PC-3 (cell line): ENCODE measurements at regions of chr12 and their contacts with region 1.

Region 1: DNA sequence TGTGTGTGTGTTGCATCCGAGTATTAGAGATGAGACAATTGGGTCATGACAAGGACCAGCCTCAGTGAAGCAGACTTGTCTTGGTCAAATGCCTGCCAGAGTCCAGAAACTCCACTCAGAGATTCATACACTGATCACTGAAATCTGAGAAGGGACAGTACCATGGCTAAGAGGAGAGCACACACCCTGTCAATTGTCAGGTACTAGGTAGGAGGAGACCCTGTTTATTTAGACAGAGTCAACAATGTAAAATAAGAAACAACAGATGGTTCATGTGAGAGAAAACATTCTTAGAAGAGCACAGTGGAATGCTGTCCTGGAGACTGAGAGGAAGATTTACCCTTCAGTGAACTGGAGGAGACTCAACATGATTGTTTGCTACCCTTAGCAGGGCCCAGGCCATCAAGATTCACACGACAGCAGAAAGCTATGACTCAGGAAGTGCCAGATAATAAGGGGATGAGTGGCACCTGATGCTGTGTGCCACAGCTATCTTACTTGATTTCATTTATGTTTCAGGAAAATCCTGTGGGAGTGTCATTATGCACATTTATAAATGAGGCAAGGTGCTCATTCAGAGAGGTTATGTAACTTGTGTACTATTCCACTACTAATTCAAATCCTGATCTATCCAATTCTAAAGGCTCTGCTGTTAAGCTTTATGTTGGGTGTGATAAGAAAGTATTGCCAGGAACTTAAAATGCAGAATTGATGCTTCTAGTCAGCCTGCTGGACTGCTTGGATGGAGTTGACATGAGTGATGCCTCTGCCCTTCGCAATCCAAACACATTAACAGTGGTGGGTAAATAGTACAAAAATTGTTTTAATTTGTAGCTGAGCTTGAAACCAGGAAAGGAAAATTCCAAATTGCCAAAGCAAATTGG is 136.6 kb upstream of the NEDD1 start:
- DNase-seq: peak; percentile 64
- ATAC-seq: peak; percentile 58
- H3K4me3 ChIP-seq: no peak overlapping the region
- H3K27ac ChIP-seq: peak overlapping the region; percentile 4
- H3K4me1 ChIP-seq: peaks cover 23% of the 10 kb centered on the region
- H3K27me3 ChIP-seq: no peaks in the 10 kb centered on the region
- CTCF ChIP-seq: no peak

Region 2: DNA sequence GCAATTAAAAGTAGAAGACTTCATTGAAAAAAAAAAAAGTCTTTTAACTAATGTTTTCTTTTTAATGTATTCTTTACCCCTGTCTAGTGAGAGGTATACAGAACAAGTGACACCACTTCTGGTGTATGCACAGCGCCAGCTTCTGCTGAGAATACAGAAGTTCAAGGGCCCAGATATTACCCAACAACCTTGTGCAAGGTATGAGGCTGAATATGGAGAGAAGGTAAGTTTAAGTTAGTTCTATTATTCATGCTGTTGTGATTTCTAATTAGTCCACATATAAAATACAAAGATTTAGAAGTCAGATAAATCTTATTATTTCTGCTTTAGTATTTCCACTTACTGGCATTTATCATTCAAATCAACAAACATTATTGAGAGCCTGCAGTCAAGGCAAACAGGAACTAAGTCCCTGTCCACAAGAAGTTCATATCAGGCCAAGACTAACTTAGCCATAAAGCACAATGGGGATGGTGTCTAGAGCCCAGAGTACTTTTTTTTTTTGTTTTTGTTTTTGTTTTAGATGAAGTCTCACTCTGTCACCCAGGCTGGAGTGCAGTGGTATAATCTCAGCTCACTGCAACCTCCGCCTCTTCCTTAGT is 112.2 kb before region 1 on chr12:
- CTCF ChIA-PET with region 1: no interaction called
- POLR2A ChIA-PET with region 1: no interaction called
- intact Hi-C with region 1: no loop called
- DNase-seq: no peak
- ATAC-seq: peak; percentile 77
- H3K4me3 ChIP-seq: no peak overlapping the region
- H3K27ac ChIP-seq: no peak overlapping the region
- H3K4me1 ChIP-seq: no peaks in the 10 kb centered on the region
- H3K27me3 ChIP-seq: peaks cover 4% of the 10 kb centered on the region; the same call in 1 of the 2 replicates
- CTCF ChIP-seq: no peak; the same call in 1 of the 2 replicates

Region 3: GRCh38 chr12:96719660-96720363 is 50.6 kb before region 1 on chr12:
- CTCF ChIA-PET with region 1: no interaction called
- POLR2A ChIA-PET with region 1: no interaction called
- intact Hi-C with region 1: loop called (anchors 2 kb)
- DNase-seq: peak; percentile 63
- ATAC-seq: peak; percentile 70
- H3K4me3 ChIP-seq: peak overlapping the region; percentile 73
- H3K27ac ChIP-seq: peak overlapping the region; percentile 10; the same call in 1 of the 2 replicates
- H3K4me1 ChIP-seq: peaks cover 10% of the 10 kb centered on the region; the same call in 1 of the 2 replicates
- H3K27me3 ChIP-seq: no peaks in the 10 kb centered on the region
- CTCF ChIP-seq: no peak

Region 4: DNA sequence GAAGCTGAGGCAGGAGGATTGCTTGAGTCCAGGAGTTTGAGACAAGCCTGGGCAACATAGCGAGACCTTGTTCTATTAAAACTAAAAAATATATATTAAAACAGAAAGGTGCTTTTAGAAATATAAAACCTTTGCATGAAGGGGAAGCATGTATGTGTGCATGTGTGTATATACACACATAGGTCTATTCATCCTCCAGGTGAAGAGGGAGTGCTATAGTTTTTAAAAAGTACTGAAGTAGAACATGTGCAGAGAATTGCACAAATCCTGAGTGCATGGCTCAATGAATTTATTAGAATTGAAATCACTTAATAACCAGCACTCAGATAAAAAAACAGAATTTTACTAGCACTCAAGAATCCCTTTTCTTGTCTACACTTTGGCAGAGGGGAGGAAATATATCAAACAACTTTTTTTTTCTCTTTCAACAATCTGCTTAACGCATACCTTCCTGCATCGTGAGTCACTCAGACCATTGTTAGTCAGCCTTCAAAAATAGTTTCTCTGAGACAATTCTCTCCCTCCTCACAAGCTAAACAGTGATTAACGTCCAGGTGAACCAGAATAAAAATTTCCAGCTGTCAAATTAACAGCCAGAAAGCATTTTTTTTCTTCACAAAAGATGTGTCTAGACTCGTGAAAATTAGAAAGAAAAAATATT is 118.9 kb after region 1 on chr12:
- CTCF ChIA-PET with region 1: no interaction called
- POLR2A ChIA-PET with region 1: no interaction called
- intact Hi-C with region 1: loop called (anchors 1 kb)
- DNase-seq: peak; percentile 90
- ATAC-seq: peak; percentile 99
- H3K4me3 ChIP-seq: peak overlapping the region; percentile 4; the same call in 1 of the 2 replicates
- H3K27ac ChIP-seq: peak overlapping the region; percentile 48
- H3K4me1 ChIP-seq: peaks cover 21% of the 10 kb centered on the region
- H3K27me3 ChIP-seq: no peaks in the 10 kb centered on the region
- CTCF ChIP-seq: no peak

Region 5: GRCh38 chr12:96906849-96907670 is 136.6 kb after region 1 on chr12 and contains the start of gene NEDD1:
- CTCF ChIA-PET with region 1: no interaction called
- POLR2A ChIA-PET with region 1: no interaction called
- intact Hi-C with region 1: loop called (anchors 5 kb)
- DNase-seq: peak; percentile 82
- ATAC-seq: peak; percentile 88
- H3K4me3 ChIP-seq: peak within 1 kb of the TSS; percentile 91
- H3K27ac ChIP-seq: peak within 1 kb of the TSS; percentile 41
- H3K4me1 ChIP-seq: peaks cover 35% of the 10 kb centered on the region
- H3K27me3 ChIP-seq: no peaks in the 10 kb centered on the region
- CTCF ChIP-seq: no peak
- total RNA-seq, gene NEDD1: 28.6 and 43.4 TPM in 2 replicates